HepG2 (cell line): ENCODE measurements at regions of chr22 and their contacts with region 1.

Region 1: DNA sequence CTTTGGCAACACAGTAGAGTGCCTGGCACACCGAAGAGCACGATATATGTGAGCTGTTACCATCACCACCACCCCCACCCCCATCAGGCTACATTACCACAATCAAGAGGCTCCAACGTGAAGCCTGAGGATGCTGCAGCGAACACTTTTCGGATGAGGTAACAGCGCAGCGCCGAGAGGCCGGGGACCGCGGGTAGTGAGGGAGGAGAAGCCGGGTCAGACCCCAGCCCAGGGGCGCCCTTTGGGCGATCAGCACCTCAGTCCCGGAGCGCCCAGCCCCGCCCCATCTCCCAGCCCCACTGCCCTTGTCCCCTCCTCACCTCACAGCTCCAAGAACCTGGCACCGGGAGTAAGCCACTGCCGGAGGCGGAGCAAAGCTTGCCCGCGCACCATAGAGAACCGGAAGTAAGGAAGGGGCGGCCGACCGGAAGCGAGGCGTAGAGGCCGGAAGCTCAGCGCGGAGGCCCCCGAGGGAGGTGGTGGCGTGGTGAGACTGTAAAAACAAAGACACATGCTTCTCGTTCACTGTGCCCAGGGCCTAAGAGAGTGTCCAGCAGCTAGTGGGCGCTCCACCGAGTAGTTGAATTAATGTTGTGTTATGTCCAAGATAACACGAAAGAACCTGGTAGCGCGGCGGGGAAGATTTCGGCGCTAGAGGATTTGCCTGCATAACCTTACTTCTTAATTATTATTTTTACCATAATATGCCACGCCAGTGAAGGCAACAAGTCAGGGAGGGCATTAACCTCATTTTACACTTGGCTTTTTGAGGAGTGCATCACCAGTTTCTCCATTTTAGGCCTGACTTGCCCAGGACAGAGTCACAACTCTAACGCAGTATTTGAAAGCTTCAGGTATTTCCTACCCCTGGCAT is at the start of gene THOC5:
- DNase-seq: peak; percentile 96
- ATAC-seq: peak; percentile 99
- H3K4me3 ChIP-seq: peak within 1 kb of the TSS; percentile 80 to 97 (median 86)
- H3K27ac ChIP-seq: peak within 1 kb of the TSS; percentile 87
- H3K4me1 ChIP-seq: peaks cover 14% of the 10 kb centered on the region
- H3K27me3 ChIP-seq: no peaks in the 10 kb centered on the region
- CTCF ChIP-seq: peak; percentile 95
- EP300 ChIP-seq: no peak
- POLR2A ChIP-seq: peak; percentile 62 to 73
- RAD21 ChIP-seq: peak; percentile 41
- total RNA-seq, gene THOC5: 46.7 and 53.5 TPM in 2 replicates

Region 2: DNA sequence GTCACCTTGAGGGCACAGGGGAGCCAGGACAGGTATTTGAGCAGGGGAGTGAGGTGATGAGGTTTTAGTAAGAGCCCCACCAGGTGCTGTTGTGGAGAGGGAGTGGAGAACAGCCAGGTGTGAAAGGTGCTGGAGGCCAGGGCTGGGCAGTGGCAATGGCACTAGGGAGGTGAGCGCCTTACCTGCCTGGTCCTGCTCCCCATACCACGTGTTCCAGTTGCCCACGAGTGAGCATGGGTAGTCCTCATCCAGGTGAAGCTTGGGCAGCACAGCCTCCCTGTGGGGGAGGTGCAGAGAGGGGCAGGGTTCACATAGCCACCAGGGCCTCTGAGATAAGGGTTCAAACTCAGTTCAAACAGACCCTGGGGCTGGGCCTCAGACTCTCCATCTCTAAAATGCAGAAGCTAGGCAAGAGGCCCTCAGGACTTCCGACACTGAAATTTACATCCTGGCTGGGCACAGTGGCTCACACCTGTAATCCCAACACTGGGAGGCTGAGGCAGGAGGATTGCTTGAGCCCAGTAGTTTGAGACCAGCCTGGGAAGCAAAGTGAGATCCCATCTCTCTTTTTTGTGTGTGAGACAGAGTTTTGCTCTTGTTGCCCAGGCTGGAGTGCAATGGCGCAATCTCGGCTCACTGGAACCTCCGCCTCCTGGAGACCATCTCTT is 15.6 kb after region 1 on chr22:
- CTCF ChIA-PET with region 1: no interaction called
- POLR2A ChIA-PET with region 1: interaction called, 90 read pairs
- in situ Hi-C with region 1: no loop called
- intact Hi-C with region 1: loop called (anchors 2 kb)
- DNase-seq: peak; percentile 65
- ATAC-seq: peak; percentile 69
- H3K4me3 ChIP-seq: no peak overlapping the region
- H3K27ac ChIP-seq: peak overlapping the region; percentile 62
- H3K4me1 ChIP-seq: peaks cover 57% of the 10 kb centered on the region
- H3K27me3 ChIP-seq: no peaks in the 10 kb centered on the region
- CTCF ChIP-seq: 0 out of 2 replicates have a peak, but pooled peaks have one; percentile 14
- EP300 ChIP-seq: peak in 1 of 2 experiments; percentile 58; a peak in 1 of 4 replicates
- POLR2A ChIP-seq: no peak
- RAD21 ChIP-seq: no peak

Region 3: DNA sequence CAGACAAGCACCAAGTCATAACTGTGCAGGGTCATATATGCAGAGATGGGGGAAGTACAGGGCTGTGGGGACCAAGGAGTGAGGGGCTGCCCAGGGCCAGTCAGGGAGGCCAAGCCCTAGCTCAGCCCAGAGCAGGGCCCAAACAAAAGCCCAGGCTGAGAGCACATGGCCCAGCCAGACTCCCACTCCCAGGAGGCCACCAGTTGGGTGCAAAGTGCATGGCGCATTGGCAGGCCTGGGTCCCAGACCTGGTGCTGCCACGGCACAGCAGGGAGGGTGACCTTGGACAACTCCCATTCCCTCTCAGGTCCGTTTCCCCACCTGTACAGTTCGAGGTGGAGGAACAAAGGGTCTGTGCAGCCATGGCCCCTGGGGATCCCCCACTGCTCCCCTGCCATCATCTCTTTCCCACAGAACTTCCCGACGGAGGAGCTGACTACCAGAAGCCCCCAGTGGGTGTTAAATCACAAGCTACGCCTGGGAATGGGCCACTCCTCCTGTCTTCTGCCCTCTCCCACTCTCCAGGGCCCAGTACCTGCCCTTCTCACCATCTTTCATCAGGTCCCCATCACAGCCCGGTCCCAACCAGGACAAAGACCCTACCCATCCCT is 26.7 kb after region 1 on chr22:
- CTCF ChIA-PET with region 1: no interaction called
- POLR2A ChIA-PET with region 1: interaction called, 95 read pairs
- in situ Hi-C with region 1: no loop called
- intact Hi-C with region 1: loop called (anchors 1 kb)
- DNase-seq: peak; percentile 92
- ATAC-seq: peak; percentile 92
- H3K4me3 ChIP-seq: peak overlapping the region; percentile 65 to 98 (median 83)
- H3K27ac ChIP-seq: peak overlapping the region; percentile 99
- H3K4me1 ChIP-seq: peaks cover 82% of the 10 kb centered on the region
- H3K27me3 ChIP-seq: no peaks in the 10 kb centered on the region; a peak in 1 of 5 replicates
- CTCF ChIP-seq: peak; percentile 35
- EP300 ChIP-seq: peak in 1 of 2 experiments; percentile 35; a peak in 2 of 4 replicates
- POLR2A ChIP-seq: peak; percentile 96 to 99
- RAD21 ChIP-seq: peak; percentile 72

Region 4: GRCh38 chr22:29593923-29594322 is 40.3 kb after region 1 on chr22:
- CTCF ChIA-PET with region 1: interaction called, 11 read pairs
- POLR2A ChIA-PET with region 1: interaction called, 50 read pairs
- in situ Hi-C with region 1: no loop called
- intact Hi-C with region 1: no loop called
- DNase-seq: peak; percentile 61
- ATAC-seq: peak; percentile 70
- H3K4me3 ChIP-seq: no peak overlapping the region
- H3K27ac ChIP-seq: no peak overlapping the region
- H3K4me1 ChIP-seq: peaks cover 37% of the 10 kb centered on the region
- H3K27me3 ChIP-seq: no peaks in the 10 kb centered on the region
- CTCF ChIP-seq: no peak
- EP300 ChIP-seq: no peak
- POLR2A ChIP-seq: no peak
- RAD21 ChIP-seq: no peak